ENCODE measurements at regions of chr5 and their contacts with region 1.

Region 1: GRCh38 chr5:90474235-90475109 is at the starts of genes MBLAC2 and POLR3G:
- DNase-seq: peak; percentile 97
- H3K27ac ChIP-seq: peak within 1 kb of the TSS; percentile 93
- CTCF ChIP-seq: peak; percentile 58

Region 2: DNA sequence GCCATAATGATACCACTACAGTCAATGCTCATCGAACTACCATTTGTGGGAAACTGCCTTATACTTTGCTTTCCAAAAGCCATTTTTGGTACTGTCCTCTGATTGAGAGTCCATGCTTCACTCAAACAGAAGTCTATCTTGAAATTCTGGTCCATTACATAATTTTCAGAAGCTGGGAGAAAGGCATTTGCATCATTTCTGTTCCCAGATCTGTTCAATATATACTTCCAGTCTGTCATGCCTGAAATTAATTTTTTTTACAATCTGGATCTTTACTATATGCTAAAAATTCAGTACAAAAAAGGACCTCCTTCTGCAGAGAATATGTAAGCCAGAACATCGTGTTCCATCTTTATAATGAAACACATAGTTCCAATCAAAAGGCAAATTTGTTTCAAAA is 1062.6 kb before region 1 on chr5:
- CTCF ChIA-PET with region 1: no interaction called
- POLR2A ChIA-PET with region 1: no interaction called
- DNase-seq: no peak
- H3K27ac ChIP-seq: no peak overlapping the region
- CTCF ChIP-seq: no peak

Region 3: DNA sequence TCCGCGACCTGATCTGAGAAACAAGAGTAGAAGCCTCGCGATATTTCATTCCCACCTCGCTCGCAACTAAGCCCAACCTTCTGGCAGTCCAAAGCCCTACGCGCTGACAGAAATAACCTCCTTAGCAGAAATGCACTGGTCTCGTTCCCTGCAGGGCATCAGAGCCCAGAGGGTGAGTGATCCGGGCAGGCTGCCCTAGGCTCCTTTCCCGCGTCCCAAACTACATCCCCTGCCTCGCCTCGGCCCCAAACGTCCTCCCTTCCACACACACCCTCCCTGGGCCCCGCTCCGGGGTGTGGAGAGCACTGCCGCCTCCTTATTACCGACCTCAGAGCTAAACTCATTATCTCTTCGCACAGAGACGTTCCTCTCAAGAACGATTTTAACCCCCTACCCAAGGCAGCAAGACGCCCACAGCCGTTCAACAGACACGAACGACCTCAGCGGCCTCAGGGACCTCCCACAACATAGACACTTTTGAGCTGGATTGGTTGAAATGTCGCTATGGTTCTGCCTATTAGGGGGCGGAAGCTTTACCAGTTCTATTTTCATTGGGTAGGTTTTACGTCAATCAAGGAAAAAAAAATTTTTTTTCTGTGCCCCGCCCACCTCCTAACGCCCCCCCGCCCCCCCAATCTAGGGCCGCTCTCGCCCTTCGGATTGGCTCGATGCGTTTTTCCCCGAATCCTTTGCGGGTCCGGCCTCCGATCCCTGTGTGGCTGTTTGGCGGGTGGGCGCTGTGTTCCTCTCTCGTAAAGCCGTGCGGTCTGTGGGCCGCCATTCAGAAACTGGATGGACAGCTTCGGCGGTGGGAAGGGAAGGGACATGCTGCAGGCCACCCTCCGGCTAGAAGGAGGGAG is 64.9 kb before region 1 on chr5 and contains the start of gene CETN3:
- CTCF ChIA-PET with region 1: no interaction called
- POLR2A ChIA-PET with region 1: interaction called, 11 read pairs
- DNase-seq: peak; percentile 98
- H3K27ac ChIP-seq: peak within 1 kb of the TSS; percentile 99
- CTCF ChIP-seq: no peak

Region 4: GRCh38 chr5:90792725-90793124 is 318.3 kb after region 1 on chr5:
- CTCF ChIA-PET with region 1: no interaction called
- POLR2A ChIA-PET with region 1: no interaction called
- DNase-seq: no peak
- H3K27ac ChIP-seq: no peak overlapping the region
- CTCF ChIP-seq: no peak

Measured in RWPE1 (cell line).